Heart right ventricle (tissue), 16 donors: ENCODE measurements at regions of chr1 and their contacts with region 1.

Region 1: DNA sequence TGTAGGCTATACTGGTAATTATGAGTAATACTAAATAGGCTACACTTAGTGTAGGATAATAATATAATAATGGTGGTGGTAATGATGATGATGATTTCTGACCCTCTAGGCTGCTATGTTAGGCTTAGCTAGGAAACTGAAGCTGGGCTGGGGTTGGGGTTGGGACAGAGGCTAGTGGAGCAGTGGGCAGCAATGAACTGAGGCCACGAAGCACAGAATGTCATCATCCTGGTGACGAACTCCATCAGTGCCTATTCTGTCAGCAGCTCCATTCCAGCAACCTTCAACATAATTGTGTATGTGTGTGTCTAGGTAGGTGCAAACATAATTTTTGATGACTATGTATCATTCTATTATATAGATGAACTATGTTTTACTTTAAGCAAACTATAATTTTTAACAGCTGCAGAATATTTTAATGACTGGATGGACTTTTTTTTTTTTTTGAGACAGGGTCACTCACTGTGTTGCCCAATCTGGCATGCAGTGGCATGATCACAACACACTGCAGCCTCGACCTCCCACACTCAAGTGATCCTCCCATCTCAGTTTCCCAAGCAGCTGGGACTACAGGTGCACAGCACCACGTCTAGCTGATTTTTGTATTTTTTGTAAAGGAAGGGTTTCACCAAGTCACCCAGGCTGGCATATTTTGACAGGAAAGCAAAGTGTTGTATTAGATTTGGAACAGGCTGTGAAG is 12.9 kb upstream of the CLIC4 start:
- DNase-seq: no peak
- ATAC-seq: no peak
- H3K4me3 ChIP-seq: no peak overlapping the region
- H3K27ac ChIP-seq: peak overlapping the region in 1 of 10 donors; percentile 74
- H3K4me1 ChIP-seq: peaks cover 17 to 62% (median 42%) of the 10 kb centered on the region in 9 donors
- H3K27me3 ChIP-seq: no peaks in the 10 kb centered on the region
- CTCF ChIP-seq: no peak

Region 2: DNA sequence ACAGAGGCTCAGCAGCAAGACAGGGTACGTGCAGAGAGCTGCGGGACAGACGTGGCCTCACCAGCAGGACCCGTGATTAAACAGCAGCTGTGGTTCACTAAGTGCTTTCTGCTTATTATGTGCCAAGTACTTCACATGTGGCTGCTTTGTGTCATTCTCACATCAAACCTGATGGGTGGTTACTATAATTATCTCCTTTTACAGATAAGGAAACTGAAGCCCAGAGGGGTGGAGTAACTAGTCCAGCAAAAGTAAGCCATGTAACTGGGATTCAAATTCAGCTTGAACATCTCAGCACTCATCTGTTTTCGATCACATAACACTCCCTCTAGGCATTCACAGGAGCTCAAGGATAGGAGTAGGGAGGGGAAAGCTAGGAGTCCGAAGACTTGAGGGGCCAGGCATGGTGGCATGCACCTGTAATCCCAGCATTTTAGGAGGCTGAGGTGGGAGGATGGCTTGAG is 37.9 kb before region 1 on chr1:
- intact Hi-C with region 1: loop called in 1 of 10 experiments (anchors 5 kb)
- DNase-seq: peak; percentile 56 to 71
- ATAC-seq: peak; percentile 78 to 93 (median 90)
- H3K4me3 ChIP-seq: no peak overlapping the region
- H3K27ac ChIP-seq: peak overlapping the region; percentile 53 to 84 (median 74)
- H3K4me1 ChIP-seq: peaks cover 21 to 62% (median 44%) of the 10 kb centered on the region in 9 donors
- H3K27me3 ChIP-seq: no peaks in the 10 kb centered on the region
- CTCF ChIP-seq: no peak